ENCODE measurements at regions of chr22 and their contacts with region 1.

Region 1: GRCh38 chr22:18024276-18024947 is at the start of gene MICAL3:
- DNase-seq: peak in 1 of 2 donors; percentile 79
- H3K4me3 ChIP-seq: peak within 1 kb of the TSS; percentile 73 to 83
- H3K27ac ChIP-seq: peak within 1 kb of the TSS; percentile 87 to 92
- H3K4me1 ChIP-seq: peaks cover 0 to 34% (median 20%) of the 10 kb centered on the region in 4 donors
- H3K27me3 ChIP-seq: no peaks in the 10 kb centered on the region
- CTCF ChIP-seq: peak; percentile 50 to 60

Region 2: GRCh38 chr22:17910561-17911311 is 113.7 kb before region 1 on chr22:
- intact Hi-C with region 1: loop called (anchors 5 kb)
- DNase-seq: peak; percentile 74 to 88
- H3K4me3 ChIP-seq: peak overlapping the region in 1 of 2 donors; percentile 14
- H3K27ac ChIP-seq: peak overlapping the region; percentile 63 to 74
- H3K4me1 ChIP-seq: peaks cover 0 to 59% (median 25%) of the 10 kb centered on the region in 4 donors
- H3K27me3 ChIP-seq: no peaks in the 10 kb centered on the region
- CTCF ChIP-seq: peak in 1 of 2 experiments; percentile 20

Measured in tibial artery (tissue), 4 donors.